ENCODE measurements at regions of chr15 and their contacts with region 1.

Region 1: DNA sequence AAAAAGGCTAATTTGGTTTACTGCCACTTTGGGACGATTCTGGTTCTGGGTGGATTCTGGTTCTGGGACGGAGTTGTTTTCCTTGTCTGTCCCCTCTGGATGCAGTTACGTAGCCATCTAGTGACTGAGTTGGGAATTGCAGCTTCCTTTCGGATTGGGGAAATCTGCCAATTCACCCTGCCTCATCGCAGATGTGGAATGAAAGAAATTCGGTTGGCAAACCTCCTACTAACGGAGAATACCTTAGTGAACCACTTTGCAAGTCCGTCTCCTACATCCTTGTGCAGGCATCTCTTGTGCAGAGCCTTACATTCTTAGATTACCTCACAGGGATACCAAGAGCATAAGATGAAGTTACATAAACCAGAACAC is 31.5 kb upstream of the AP4E1 start:
- DNase-seq: peak; percentile 83
- ATAC-seq: peak; percentile 84
- H3K4me3 Mint-ChIP-seq: peak overlapping the region; percentile 46; the same call in 1 of the 2 replicates
- H3K27ac Mint-ChIP-seq: no peak overlapping the region; the same call in 1 of the 2 replicates
- H3K4me1 Mint-ChIP-seq: no peaks in the 10 kb centered on the region
- H3K27me3 Mint-ChIP-seq: peaks cover 6% of the 10 kb centered on the region
- CTCF ChIP-seq: peak; percentile 89

Region 2: DNA sequence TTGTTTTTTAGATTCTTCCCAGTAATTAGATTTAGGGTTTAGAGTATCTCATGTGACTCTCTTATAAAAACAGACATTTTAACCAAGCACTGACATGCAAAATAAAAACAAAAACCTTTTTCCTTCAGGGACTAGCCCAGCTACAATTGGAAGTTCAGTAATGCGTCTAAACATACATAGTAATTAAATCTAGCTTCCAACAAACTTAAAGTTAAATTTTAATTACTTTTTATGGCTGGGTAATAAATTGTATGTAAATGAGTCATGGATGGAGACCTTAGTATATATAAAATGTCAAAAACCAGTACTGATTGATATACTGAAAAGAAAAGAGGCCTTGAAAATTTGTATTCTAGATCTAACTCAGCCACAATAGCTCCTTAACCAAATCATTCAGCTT is 12.1 kb before region 1 on chr15:
- CTCF ChIA-PET with region 1: interaction called, 16 read pairs
- POLR2A ChIA-PET with region 1: no interaction called
- DNase-seq: no peak
- ATAC-seq: no peak
- H3K4me3 Mint-ChIP-seq: no peak overlapping the region
- H3K27ac Mint-ChIP-seq: no peak overlapping the region
- H3K4me1 Mint-ChIP-seq: 0 out of 2 replicates have a peak, but pooled peaks cover 3% of the 10 kb centered on the region
- H3K27me3 Mint-ChIP-seq: no peaks in the 10 kb centered on the region; the same call in 1 of the 2 replicates
- CTCF ChIP-seq: no peak

Region 3: GRCh38 chr15:51051776-51052175 is 174.8 kb after region 1 on chr15:
- CTCF ChIA-PET with region 1: no interaction called
- POLR2A ChIA-PET with region 1: no interaction called
- DNase-seq: no peak
- ATAC-seq: no peak
- H3K4me3 Mint-ChIP-seq: no peak overlapping the region
- H3K27ac Mint-ChIP-seq: no peak overlapping the region
- H3K4me1 Mint-ChIP-seq: peaks cover 39% of the 10 kb centered on the region
- H3K27me3 Mint-ChIP-seq: no peaks in the 10 kb centered on the region
- CTCF ChIP-seq: no peak

Measured in WTC11 (cell line).